Left cardiac atrium (tissue), 4 donors: ENCODE measurements at regions of chr11 and their contacts with region 1.

Region 1: GRCh38 chr11:60193687-60194433 is 11.0 kb upstream of the MS4A6A start:
- DNase-seq: peak; percentile 53
- ATAC-seq: peak; percentile 57 to 84

Region 2: GRCh38 chr11:59822989-59823566 is 370.8 kb before region 1 on chr11:
- intact Hi-C with region 1: loop called in 1 of 2 experiments (anchors 5 kb)
- DNase-seq: no peak
- ATAC-seq: peak; percentile 79 to 83

Region 3: DNA sequence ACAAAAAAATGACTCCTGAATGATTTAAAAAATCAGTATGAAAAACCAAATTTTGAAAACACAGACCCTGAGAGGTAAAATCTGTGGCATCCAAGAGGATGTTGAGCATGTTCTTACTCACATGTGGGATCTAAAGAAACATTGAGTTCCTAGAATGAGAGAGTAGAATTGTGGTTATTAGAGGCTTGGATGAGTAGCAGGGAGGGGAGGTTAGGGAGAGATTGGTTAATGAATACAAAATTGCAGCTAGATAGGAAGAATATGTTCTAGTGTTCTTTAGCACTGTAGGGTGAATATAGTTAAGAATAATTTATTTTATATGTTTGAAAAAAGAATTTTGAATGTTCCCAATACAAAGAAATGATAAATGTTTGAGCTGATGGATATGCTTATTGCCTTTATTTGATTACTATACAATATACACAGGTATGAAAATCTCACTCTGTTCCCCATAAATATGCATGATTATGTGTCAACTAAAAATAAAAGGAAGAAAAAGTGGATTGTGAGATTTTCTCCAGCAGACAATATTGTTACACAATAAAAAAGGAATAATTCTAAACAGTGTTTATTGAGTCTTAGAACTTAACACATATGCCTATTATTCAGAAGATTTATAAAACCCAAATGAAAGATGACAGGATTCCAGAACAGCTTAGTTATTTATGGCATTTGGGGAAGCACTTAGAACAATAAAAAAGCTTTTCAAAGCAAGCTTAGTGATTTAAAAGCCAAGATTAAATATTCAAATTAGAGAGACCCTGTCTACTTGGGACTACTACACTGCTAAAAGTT is 76.7 kb before region 1 on chr11:
- intact Hi-C with region 1: loop called in 1 of 2 experiments (anchors 2 kb)
- DNase-seq: no peak
- ATAC-seq: no peak